ENCODE measurements at regions of chr11 and their contacts with region 1.

Region 1: DNA sequence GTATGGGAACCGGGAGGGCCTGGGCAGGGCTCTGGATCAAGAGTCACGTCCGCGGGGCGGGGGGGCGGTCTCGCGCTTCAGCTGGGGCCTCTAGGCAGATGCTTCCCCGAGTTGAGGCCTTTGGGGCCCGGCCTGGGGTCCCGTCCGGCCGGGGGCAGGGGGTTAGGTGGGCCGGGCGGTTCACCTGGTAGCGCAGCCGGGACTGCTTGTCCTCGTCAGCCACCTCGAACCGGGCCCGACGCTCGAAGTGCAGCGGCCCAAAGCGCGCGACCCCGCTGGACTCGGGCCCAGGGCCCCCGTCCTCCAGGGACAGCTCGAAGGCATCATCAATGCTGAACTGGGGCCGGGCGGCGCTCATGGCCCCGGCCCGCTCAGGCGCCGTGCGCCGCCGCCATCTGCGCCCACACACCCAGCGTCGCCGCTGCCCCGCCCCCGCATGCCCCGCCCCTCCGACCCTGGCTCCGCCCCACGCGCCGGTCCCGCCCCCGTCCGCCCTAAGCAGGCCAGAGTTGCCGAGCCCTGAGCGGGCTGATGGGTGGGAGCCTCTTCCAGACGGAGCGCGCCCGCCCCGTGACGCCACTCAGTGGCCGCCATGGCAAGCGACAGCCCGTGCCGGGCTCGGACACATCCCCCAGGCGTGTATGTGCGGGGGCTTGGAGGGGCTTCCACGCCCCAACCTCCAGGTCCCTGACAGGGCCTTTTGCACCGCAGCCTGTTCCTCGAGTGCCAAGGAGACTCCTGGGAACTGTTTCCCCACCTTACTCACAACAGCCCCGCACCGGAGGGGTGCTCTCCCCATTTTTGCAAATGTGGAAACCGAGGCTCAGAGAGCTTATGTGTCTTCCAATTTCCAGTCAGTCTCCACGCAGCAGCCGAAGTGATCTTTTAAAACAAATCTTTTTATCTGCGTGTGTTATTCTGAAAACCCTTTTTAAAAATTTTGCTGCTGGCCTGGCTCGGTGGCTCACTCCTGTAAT is at the start of gene TMEM134:
- DNase-seq: peak; percentile 85 to 96 (median 88)
- ATAC-seq: peak; percentile 74 to 79
- H3K4me3 Mint-ChIP-seq: peak within 1 kb of the TSS; percentile 83 to 93 (median 90)
- H3K27ac Mint-ChIP-seq: peak within 1 kb of the TSS; percentile 84 to 96 (median 92)
- H3K4me1 Mint-ChIP-seq: peaks cover 13 to 40% (median 37%) of the 10 kb centered on the region in 4 donors
- H3K27me3 Mint-ChIP-seq: no peaks in the 10 kb centered on the region
- polyA plus RNA-seq, gene TMEM134: 128 to 148 (median 144) TPM

Region 2: GRCh38 chr11:67401495-67402191 is 67.5 kb before region 1 on chr11 and contains the start of gene PPP1CA:
- POLR2A ChIA-PET with region 1: interaction called, 230 read pairs
- DNase-seq: peak; percentile 82 to 98 (median 93)
- ATAC-seq: peak; percentile 62 to 71
- H3K4me3 Mint-ChIP-seq: peak within 1 kb of the TSS; percentile 87 to 99 (median 97)
- H3K27ac Mint-ChIP-seq: peak within 1 kb of the TSS; percentile 85 to 96 (median 93)
- H3K4me1 Mint-ChIP-seq: peaks cover 18 to 79% (median 62%) of the 10 kb centered on the region in 4 donors
- H3K27me3 Mint-ChIP-seq: no peaks in the 10 kb centered on the region
- polyA plus RNA-seq, gene PPP1CA: 357 to 518 (median 403) TPM

Region 3: GRCh38 chr11:67420646-67421420 is 48.3 kb before region 1 on chr11:
- POLR2A ChIA-PET with region 1: interaction called, 235 read pairs
- DNase-seq: peak; percentile 97 to 100 (median 99)
- ATAC-seq: peak; percentile 64 to 76
- H3K4me3 Mint-ChIP-seq: peak overlapping the region; percentile 76 to 94 (median 86)
- H3K27ac Mint-ChIP-seq: peak overlapping the region; percentile 80 to 100 (median 93)
- H3K4me1 Mint-ChIP-seq: peaks cover 23 to 67% (median 58%) of the 10 kb centered on the region in 4 donors
- H3K27me3 Mint-ChIP-seq: no peaks in the 10 kb centered on the region

Region 4: DNA sequence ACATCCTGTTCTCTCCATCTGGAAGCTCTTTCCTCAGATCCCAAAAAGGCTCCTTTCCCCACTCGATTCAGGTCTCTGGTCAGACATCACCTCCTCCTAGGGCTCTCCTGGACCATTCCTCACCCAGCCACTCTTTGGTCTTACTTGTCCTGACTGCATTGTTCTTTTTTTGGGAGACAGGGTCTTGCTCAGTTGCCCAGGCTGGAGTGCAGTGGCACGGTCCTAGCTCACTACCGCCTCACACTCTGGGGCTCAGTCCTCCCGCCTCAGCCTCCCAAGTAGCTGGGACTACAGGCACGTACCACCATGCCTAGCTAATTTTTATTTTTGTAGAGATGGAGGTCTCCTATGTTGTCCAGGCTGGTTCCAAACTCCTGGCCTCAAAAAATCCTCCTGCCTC is 23.6 kb before region 1 on chr11:
- POLR2A ChIA-PET with region 1: interaction called, 780 read pairs
- DNase-seq: no peak
- ATAC-seq: no peak
- H3K4me3 Mint-ChIP-seq: peak overlapping the region in 9 of 10 donors; percentile 65 to 88 (median 82)
- H3K27ac Mint-ChIP-seq: peak overlapping the region; percentile 90 to 97 (median 93)
- H3K4me1 Mint-ChIP-seq: peaks cover 30 to 87% (median 78%) of the 10 kb centered on the region in 4 donors
- H3K27me3 Mint-ChIP-seq: no peaks in the 10 kb centered on the region

Region 5: GRCh38 chr11:67482825-67483798 is 14.0 kb after region 1 on chr11 and contains the start of gene AIP:
- POLR2A ChIA-PET with region 1: interaction called, 176 read pairs
- DNase-seq: peak; percentile 90 to 99 (median 97)
- ATAC-seq: peak; percentile 75 to 78
- H3K4me3 Mint-ChIP-seq: peak within 1 kb of the TSS; percentile 86 to 100 (median 98)
- H3K27ac Mint-ChIP-seq: peak within 1 kb of the TSS; percentile 96 to 100 (median 99)
- H3K4me1 Mint-ChIP-seq: peaks cover 29 to 56% (median 53%) of the 10 kb centered on the region in 4 donors
- H3K27me3 Mint-ChIP-seq: no peaks in the 10 kb centered on the region
- polyA plus RNA-seq, gene AIP: 146 to 169 (median 146) TPM

Region 6: GRCh38 chr11:67656278-67656922 is 187.3 kb after region 1 on chr11:
- POLR2A ChIA-PET with region 1: no interaction called
- DNase-seq: no peak
- ATAC-seq: no peak
- H3K4me3 Mint-ChIP-seq: no peak overlapping the region
- H3K27ac Mint-ChIP-seq: peak overlapping the region in 1 of 10 donors; percentile 66
- H3K4me1 Mint-ChIP-seq: peaks cover 0 to 2% (median 2%) of the 10 kb centered on the region in 4 donors
- H3K27me3 Mint-ChIP-seq: peaks cover 0 to 1% (median 0%) of the 10 kb centered on the region in 5 donors

Measured in naive thymus-derived CD8-positive, alpha-beta T cell (primary cell).